ENCODE measurements at regions of chr1 and their contacts with region 1.

Region 1: DNA sequence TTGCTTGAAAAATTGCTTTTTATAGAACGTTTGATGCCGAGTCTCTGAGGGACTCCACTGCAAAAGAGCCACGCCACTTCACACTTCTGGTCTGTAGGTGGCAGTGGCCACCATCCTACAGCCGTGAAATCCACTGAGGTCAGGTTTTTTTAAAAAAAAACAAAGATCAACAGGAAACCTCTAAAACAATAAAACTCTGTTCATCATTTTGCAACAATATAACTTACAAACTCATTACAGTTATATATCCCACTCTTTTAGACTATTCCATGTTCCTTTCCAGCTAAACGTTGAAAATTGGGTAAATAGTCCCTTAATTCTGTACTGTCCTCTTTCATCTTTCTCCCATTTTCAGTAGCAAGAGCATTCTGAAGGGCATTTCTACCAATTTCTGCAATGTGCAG is 64.6 kb upstream of the FMN2 start:
- DNase-seq: no peak

Region 2: GRCh38 chr1:239976130-239976968 is 50.7 kb before region 1 on chr1:
- intact Hi-C with region 1: no loop called
- DNase-seq: no peak

Region 3: GRCh38 chr1:240149484-240150094 is 122.5 kb after region 1 on chr1:
- intact Hi-C with region 1: loop called in 1 of 2 experiments (anchors 10 kb)
- DNase-seq: no peak